ENCODE measurements at regions of chrX and their contacts with region 1.

Region 1: DNA sequence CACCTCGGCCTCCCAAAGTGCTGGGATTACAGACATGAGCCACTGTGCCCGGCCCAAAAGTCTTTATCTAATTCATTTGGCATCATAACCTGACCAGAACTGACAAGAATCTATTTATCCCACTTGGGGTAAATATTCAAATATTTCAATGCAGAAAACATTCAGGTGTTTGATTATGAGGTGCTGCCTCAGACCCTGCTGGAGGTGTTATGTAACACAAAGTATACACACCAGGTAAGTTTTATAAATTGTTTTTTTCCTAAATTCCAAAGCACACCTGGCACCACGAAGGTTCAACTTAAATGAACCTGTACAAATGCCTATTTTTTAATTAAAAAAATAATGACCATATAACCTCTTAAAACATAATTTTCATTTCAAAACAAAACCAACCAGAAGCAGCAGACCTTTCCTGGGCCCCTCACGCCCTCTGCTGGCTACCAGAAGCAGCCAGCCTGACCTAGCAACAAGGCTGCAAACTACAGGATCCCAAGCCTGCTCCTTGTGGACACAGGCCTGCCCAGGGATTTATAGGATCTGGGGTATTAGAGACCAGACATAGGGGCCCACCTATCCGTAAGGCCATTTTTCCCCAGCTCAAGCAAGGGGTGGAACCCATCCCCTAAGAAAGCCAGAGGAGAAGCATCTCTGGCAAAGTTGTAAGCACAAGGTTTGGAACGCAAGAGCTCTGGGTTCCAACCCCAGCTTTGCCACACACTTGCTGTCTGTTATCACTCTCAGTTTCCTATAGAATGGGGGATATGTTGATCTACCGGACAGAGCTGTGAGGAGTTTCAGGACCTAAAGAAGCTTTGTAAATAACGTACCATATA is 11.7 kb downstream of the OTUD5 start:
- DNase-seq: no peak
- H3K4me3 ChIP-seq: no peak overlapping the region
- CTCF ChIP-seq: peak; percentile 70

Region 2: GRCh38 chrX:48648336-48648751 is 297.4 kb before region 1 on chrX:
- CTCF ChIA-PET with region 1: interaction called, 15 read pairs
- POLR2A ChIA-PET with region 1: no interaction called
- DNase-seq: no peak
- H3K4me3 ChIP-seq: no peak overlapping the region
- CTCF ChIP-seq: no peak

Region 3: GRCh38 chrX:48665991-48666390 is 279.7 kb before region 1 on chrX:
- CTCF ChIA-PET with region 1: no interaction called
- POLR2A ChIA-PET with region 1: no interaction called
- DNase-seq: no peak
- H3K4me3 ChIP-seq: no peak overlapping the region
- CTCF ChIP-seq: no peak

Region 4: DNA sequence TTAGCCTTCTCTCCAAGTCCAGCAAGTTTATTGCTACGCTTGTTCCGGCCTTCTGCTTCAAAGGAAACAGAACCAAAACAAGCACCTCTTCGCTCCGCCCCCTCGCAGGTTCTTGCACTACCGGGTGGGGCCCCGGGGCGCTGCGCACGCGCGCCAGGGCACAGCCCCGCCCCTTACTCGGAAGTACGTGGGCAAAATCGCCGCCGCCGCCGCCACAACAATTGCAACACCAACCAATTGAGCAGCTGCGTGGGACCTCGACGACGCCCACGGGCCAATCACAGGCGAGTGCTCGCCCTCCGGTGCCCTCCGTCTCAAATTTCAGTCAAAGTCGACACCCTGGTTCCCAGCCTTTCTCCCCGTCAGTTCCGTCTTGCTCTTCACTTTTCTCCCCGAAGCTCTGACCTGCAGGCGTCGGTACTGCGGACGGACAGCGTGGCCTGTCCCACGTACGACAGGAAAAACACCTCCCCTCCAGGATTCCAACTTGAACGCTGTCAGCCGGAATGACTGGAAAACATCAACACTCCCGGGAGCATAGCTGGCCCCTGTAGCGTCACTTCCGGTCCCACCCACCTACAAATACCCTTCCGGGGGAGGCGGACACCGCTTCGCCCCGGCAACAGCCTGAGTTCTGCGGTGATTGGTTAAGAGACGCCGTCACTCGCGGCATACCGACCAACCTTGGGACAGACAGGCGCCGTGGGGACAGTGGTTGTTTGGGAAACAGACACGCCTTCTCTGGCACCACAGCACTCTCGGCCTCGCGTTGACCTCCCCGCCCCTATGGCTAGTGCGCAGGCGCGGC is 12.3 kb after region 1 on chrX:
- CTCF ChIA-PET with region 1: interaction called, 17 read pairs
- POLR2A ChIA-PET with region 1: no interaction called
- DNase-seq: peak; percentile 89
- H3K4me3 ChIP-seq: peak overlapping the region; percentile 72
- CTCF ChIP-seq: no peak

Region 5: GRCh38 chrX:49230469-49231232 is 284.9 kb after region 1 on chrX:
- CTCF ChIA-PET with region 1: no interaction called
- POLR2A ChIA-PET with region 1: no interaction called
- DNase-seq: no peak
- H3K4me3 ChIP-seq: no peak overlapping the region
- CTCF ChIP-seq: no peak